Right cardiac atrium (tissue), 5 donors: ENCODE measurements at regions of chr2 and their contacts with region 1.

Region 1: DNA sequence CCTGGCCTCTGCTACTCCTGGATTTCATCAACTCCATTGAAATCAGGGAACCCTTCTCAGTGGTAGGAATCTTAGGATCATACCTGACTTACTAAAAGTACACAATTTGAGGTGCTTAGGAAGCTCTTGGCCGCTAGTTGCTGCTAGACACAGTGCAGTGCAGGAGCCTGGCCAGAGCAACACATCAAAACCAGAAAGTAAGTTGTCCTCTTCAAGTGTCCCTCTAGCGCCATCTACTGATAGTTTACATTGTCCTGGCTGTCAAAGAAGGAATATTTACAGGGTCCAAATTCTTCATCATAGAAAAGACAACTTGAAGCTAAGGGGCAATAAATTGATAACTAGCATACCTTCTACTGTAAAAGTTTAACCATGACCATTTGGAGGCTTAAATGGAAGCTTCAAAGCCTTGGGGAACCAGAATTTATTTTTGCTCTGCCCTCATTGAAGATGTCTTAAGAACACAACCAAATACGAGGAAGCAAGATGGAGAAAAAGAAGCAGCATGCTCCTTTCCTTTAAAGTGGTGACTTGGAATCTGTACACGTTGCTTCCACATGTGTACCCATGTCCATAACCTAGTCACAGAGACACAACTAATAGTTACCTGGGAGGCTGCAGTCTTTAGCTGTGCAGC is 889.1 kb upstream of the GCFC2 start:
- DNase-seq: peak in 2 of 3 donors; percentile 26 to 60
- ATAC-seq: peak; percentile 51 to 64
- H3K4me3 ChIP-seq: no peak overlapping the region
- H3K27ac ChIP-seq: no peak overlapping the region
- H3K4me1 ChIP-seq: no peaks in the 10 kb centered on the region
- H3K27me3 ChIP-seq: no peaks in the 10 kb centered on the region

Region 2: DNA sequence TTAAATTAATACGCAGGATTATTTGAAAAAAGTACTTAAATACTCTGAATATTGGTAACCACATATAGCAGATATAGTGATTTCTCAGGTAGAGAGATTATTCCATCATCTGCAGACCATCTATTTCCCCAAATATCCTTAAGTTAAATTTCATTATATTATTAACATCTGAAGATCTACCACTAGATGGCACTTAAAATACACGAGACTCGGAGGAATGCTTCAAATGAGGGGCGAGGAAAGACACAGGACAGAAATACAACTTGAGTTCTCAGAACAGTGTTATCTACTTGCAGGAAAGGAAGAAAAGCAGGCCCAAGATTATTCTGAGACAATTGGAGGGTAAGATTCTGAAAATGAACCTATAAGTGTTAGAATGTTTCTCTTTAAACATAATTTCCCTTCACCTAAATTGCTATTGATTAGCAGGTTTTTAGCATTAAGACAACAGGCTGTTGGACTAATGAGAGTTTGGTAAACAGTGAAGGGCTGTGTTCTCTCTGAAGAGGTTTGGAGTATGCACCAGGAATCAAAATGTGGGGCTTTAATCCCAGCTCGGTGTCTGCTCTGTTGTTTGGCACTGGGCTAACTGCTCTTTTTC is 812.2 kb before region 1 on chr2:
- intact Hi-C with region 1: loop called in 1 of 4 experiments (anchors 10 kb)
- DNase-seq: no peak
- ATAC-seq: no peak
- H3K4me3 ChIP-seq: no peak overlapping the region
- H3K27ac ChIP-seq: no peak overlapping the region
- H3K4me1 ChIP-seq: no peaks in the 10 kb centered on the region
- H3K27me3 ChIP-seq: no peaks in the 10 kb centered on the region

Region 3: GRCh38 chr2:76197842-76198448 is 401.9 kb before region 1 on chr2:
- intact Hi-C with region 1: loop called in 1 of 4 experiments (anchors 10 kb)
- DNase-seq: peak; percentile 18 to 42 (median 38)
- ATAC-seq: no peak
- H3K4me3 ChIP-seq: no peak overlapping the region
- H3K27ac ChIP-seq: no peak overlapping the region
- H3K4me1 ChIP-seq: no peaks in the 10 kb centered on the region
- H3K27me3 ChIP-seq: no peaks in the 10 kb centered on the region

Region 4: GRCh38 chr2:76684756-76685155 is 84.9 kb after region 1 on chr2:
- intact Hi-C with region 1: no loop called
- DNase-seq: no peak
- ATAC-seq: no peak
- H3K4me3 ChIP-seq: no peak overlapping the region
- H3K27ac ChIP-seq: no peak overlapping the region
- H3K4me1 ChIP-seq: no peaks in the 10 kb centered on the region
- H3K27me3 ChIP-seq: no peaks in the 10 kb centered on the region